PC-9 (cell line): ENCODE measurements at regions of chr1 and their contacts with region 1.

Region 1: DNA sequence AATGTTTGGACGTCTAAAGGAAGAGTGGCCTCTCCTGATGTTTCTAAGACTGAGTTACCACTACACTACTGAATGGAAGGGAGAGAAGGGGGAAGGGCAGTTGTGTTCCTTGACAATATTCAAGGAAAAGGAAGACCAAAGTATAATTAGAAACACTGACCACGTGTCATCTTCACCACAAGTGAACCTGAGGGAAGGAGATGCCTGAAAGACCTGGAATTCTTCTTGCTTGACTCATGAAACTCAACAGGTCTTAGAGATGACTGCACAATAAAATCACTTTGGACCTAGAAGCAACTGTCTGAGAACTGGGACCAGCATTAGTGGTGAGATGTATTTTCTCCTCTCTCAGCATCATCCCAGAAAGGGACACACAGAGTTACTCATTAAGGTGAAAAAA is 56.7 kb downstream of the PTPN14 start:
- DNase-seq: peak; percentile 41 to 99
- H3K4me3 ChIP-seq: no peak overlapping the region
- H3K27ac ChIP-seq: peak overlapping the region; percentile 32
- H3K4me1 ChIP-seq: peaks cover 43% of the 10 kb centered on the region
- H3K27me3 ChIP-seq: no peaks in the 10 kb centered on the region
- CTCF ChIP-seq: no peak

Region 2: GRCh38 chr1:214476958-214477870 is 17.5 kb before region 1 on chr1:
- CTCF ChIA-PET with region 1: interaction called, 3 read pairs
- POLR2A ChIA-PET with region 1: no interaction called
- intact Hi-C with region 1: loop called (anchors 2 kb)
- DNase-seq: peak in 1 of 2 experiments; percentile 39
- H3K4me3 ChIP-seq: no peak overlapping the region
- H3K27ac ChIP-seq: no peak overlapping the region
- H3K4me1 ChIP-seq: peaks cover 35% of the 10 kb centered on the region
- H3K27me3 ChIP-seq: no peaks in the 10 kb centered on the region
- CTCF ChIP-seq: no peak

Region 3: DNA sequence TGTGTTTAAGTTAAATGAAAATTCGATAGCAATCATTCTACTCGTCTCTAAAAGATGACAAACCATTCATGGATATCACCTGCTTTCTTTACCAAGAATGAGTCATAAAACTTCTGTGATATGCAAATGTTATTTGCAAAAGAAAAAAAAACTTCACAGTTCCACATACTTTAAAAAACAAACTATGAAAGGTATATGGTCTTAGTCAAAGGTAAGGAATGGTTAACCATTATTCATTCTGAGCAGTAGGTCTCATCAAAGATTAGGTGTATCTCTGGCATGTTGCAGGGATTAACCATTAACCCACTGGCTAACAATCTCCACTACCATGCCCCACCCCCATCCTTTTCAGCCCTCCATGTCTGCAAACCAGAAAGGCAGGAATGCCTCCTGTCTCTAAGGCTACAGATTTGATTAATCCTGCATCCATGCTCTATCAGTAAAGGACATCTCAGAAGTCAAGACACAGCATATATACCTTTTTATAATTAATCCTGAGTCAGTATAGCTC is 12.3 kb after region 1 on chr1:
- CTCF ChIA-PET with region 1: no interaction called
- POLR2A ChIA-PET with region 1: no interaction called
- intact Hi-C with region 1: loop called (anchors 1 kb)
- DNase-seq: peak; percentile 75 to 97
- H3K4me3 ChIP-seq: peak overlapping the region; percentile 6; the same call in 1 of the 2 replicates
- H3K27ac ChIP-seq: peak overlapping the region; percentile 13; the same call in 1 of the 2 replicates
- H3K4me1 ChIP-seq: peaks cover 47% of the 10 kb centered on the region
- H3K27me3 ChIP-seq: no peaks in the 10 kb centered on the region
- CTCF ChIP-seq: no peak

Region 4: GRCh38 chr1:214525535-214526019 is 30.9 kb after region 1 on chr1:
- CTCF ChIA-PET with region 1: interaction called, 7 read pairs
- POLR2A ChIA-PET with region 1: no interaction called
- intact Hi-C with region 1: loop called (anchors 2 kb)
- DNase-seq: peak; percentile 77 to 96
- H3K4me3 ChIP-seq: peak overlapping the region; percentile 4; the same call in 1 of the 2 replicates
- H3K27ac ChIP-seq: peak overlapping the region; percentile 43
- H3K4me1 ChIP-seq: peaks cover 37% of the 10 kb centered on the region
- H3K27me3 ChIP-seq: no peaks in the 10 kb centered on the region
- CTCF ChIP-seq: no peak